MCF 10A (cell line): ENCODE measurements at regions of chr1 and their contacts with region 1.

Region 1: GRCh38 chr1:39189592-39190041 is 14.9 kb upstream of the MACF1 start:
- DNase-seq: no peak
- H3K4me3 Mint-ChIP-seq: no peak overlapping the region
- H3K27ac Mint-ChIP-seq: peak overlapping the region; percentile 96
- H3K4me1 Mint-ChIP-seq: peaks cover 56% of the 10 kb centered on the region
- H3K27me3 Mint-ChIP-seq: no peaks in the 10 kb centered on the region
- CTCF ChIP-seq: no peak

Region 2: GRCh38 chr1:38727684-38728584 is 461.7 kb before region 1 on chr1:
- CTCF ChIA-PET with region 1: no interaction called
- POLR2A ChIA-PET with region 1: no interaction called
- intact Hi-C with region 1: no loop called
- DNase-seq: peak; percentile 68
- H3K4me3 Mint-ChIP-seq: no peak overlapping the region
- H3K27ac Mint-ChIP-seq: no peak overlapping the region
- H3K4me1 Mint-ChIP-seq: peaks cover 21% of the 10 kb centered on the region
- H3K27me3 Mint-ChIP-seq: peaks cover 25% of the 10 kb centered on the region
- CTCF ChIP-seq: no peak

Region 3: DNA sequence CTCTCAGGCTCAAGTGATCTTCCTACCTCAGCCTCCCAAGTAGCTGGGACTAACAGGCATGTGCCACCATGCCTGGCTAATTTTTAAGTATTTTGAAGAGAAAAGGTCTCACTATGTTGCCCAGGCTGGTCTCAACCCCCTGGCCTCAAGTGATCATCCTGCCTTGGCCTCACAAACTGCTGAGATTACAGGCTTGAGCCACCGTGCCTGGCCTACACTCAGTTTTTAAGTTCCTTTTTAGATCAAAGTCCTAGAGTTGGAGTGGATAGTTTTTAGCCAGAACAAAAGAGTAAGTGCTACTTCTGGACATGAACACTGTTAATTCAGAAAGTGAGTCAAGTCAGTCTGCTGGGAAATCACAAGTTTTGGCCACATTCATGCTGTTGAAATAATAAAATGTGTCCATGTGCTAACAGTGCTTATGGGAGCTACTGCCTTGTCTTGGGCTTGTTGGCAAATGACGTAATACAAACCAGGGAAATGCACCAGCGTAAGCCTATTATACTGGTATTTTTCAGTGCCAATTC is 79.2 kb before region 1 on chr1:
- CTCF ChIA-PET with region 1: interaction called, 55 read pairs
- POLR2A ChIA-PET with region 1: interaction called, 327 read pairs
- intact Hi-C with region 1: no loop called
- DNase-seq: peak; percentile 82
- H3K4me3 Mint-ChIP-seq: peak overlapping the region; percentile 30
- H3K27ac Mint-ChIP-seq: no peak overlapping the region
- H3K4me1 Mint-ChIP-seq: peaks cover 20% of the 10 kb centered on the region
- H3K27me3 Mint-ChIP-seq: no peaks in the 10 kb centered on the region
- CTCF ChIP-seq: no peak

Region 4: DNA sequence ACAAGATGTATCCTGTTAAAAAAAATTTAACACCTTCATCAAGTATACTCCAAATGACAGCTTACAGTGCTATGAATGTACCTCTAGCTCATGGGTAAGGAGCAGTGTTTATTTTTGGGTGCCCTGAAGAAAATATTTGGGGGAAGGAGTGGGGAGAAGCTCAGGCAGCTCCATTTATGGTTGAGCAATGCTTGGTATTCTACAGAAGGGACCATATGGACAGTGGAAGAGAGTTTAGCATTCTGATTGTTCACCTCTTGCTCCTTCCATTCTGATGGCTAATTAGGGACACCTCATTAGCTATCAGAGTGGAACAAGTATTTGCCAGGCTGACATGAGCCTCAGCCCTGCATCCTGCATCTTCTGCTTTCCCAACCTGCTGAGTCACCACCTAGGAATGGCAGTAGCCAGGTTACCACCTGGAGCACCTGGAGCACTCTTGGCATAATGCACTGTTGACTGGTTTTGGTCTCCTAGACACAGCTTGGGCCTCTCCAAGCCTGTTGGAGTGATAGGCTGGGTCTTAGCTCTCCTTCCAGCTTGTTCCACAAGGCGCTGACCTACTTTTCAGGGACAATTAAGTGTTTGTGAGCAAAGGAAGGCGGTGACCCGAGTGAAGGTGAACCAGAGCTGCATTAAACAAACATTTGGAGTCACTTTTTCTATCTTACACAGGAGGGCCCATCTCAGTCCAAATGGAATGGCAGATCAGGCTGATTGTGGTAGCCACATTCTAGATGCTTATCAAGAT is 47.0 kb before region 1 on chr1:
- CTCF ChIA-PET with region 1: interaction called, 57 read pairs
- POLR2A ChIA-PET with region 1: interaction called, 28 read pairs
- intact Hi-C with region 1: no loop called
- DNase-seq: peak; percentile 87
- H3K4me3 Mint-ChIP-seq: no peak overlapping the region
- H3K27ac Mint-ChIP-seq: peak overlapping the region; percentile 49
- H3K4me1 Mint-ChIP-seq: peaks cover 36% of the 10 kb centered on the region
- H3K27me3 Mint-ChIP-seq: no peaks in the 10 kb centered on the region
- CTCF ChIP-seq: no peak

Region 5: DNA sequence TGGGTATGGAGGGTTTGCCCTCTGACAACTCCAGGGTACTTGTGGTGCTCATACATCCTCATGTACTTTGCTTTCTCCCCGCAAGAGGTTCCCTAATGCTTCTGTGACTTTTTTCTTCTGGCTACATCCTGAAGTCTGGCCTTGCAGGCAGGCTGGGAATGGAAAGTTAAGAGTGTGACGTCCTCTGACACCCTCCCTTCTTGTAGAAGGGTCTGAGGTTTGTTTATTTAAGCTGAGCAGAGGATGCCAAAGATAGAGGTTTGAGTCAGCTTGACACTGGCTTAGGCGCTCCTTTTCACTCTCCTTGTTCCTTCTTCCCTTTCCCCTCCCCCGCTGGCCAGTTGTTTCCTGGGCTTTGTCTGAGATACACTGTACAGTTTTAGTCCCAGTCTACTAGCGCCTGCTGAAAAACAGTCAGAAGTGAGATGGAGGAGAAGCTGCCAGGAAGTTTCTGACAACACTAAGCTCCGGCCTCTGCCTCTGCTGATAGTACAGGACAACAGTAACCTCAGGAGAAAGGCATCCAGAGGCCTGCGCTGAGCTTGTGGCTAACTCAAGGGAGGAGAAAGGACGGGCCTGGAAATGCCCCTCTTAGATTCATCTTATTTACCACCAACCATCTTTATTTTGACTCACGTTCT is 14.9 kb after region 1 on chr1 and contains the start of gene MACF1:
- CTCF ChIA-PET with region 1: interaction called, 43 read pairs
- POLR2A ChIA-PET with region 1: interaction called, 17 read pairs
- intact Hi-C with region 1: no loop called
- DNase-seq: peak; percentile 76
- H3K4me3 Mint-ChIP-seq: peak within 1 kb of the TSS; percentile 49
- H3K27ac Mint-ChIP-seq: peak within 1 kb of the TSS; percentile 93
- H3K4me1 Mint-ChIP-seq: peaks cover 34% of the 10 kb centered on the region
- H3K27me3 Mint-ChIP-seq: no peaks in the 10 kb centered on the region
- CTCF ChIP-seq: peak; percentile 13
- total RNA-seq, gene MACF1: 188 and 197 TPM in 2 replicates

Region 6: DNA sequence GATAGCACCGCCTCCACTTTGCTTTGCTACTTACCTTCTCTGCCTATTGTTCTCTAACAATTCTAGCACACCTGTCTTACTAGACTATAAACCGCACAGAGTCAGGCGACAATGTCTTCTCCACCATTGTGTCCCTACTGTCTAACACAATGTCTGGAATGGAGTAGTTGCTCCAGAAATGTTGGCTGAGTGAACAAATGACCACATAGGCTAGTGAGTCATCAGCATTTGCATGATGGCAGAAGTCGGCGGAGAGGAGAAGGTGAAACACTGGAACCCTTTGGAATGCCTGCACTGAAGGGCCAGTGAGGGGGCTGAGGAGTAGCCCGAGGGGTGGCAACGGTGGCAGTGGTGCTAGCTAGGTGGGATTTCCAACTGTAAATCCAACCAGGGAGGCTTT is 400.9 kb after region 1 on chr1:
- CTCF ChIA-PET with region 1: no interaction called
- POLR2A ChIA-PET with region 1: no interaction called
- intact Hi-C with region 1: no loop called
- DNase-seq: peak; percentile 50
- H3K4me3 Mint-ChIP-seq: no peak overlapping the region
- H3K27ac Mint-ChIP-seq: no peak overlapping the region
- H3K4me1 Mint-ChIP-seq: no peaks in the 10 kb centered on the region
- H3K27me3 Mint-ChIP-seq: peaks cover 19% of the 10 kb centered on the region
- CTCF ChIP-seq: no peak